Psoas muscle (tissue), 8 donors: ENCODE measurements at regions of chr12 and their contacts with region 1.

Region 1: GRCh38 chr12:90290980-90291975 is 582.6 kb upstream of the ATP2B1 start:
- DNase-seq: no peak
- ATAC-seq: no peak
- H3K4me3 ChIP-seq: no peak overlapping the region
- H3K27ac ChIP-seq: no peak overlapping the region
- H3K4me1 ChIP-seq: no peaks in the 10 kb centered on the region
- H3K27me3 ChIP-seq: no peaks in the 10 kb centered on the region
- CTCF ChIP-seq: no peak

Region 2: DNA sequence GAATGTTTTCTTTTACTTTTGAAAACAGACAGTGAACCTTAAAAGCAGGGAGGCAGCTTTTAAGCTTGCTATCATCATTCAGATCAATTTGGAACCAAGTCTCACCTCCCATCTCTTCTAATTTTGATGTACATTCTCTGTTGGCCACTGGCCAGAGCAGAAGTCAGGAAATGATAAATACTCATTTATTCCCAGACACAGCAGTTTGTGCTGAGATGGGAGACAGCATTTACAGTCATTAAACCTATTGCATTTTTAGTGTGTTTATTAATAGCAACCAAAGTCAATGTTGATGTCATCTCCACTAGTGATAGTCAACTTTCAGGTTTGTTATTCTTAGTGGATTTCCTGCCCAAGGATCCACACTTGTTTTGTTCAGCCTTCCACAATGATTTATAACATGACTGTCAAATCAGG is 262.6 kb before region 1 on chr12:
- intact Hi-C with region 1: no loop called
- DNase-seq: no peak
- ATAC-seq: peak in 3 of 4 donors; percentile 41 to 76 (median 68)
- H3K4me3 ChIP-seq: no peak overlapping the region
- H3K27ac ChIP-seq: peak overlapping the region; percentile 78
- H3K4me1 ChIP-seq: peaks cover 15% of the 10 kb centered on the region
- H3K27me3 ChIP-seq: no peaks in the 10 kb centered on the region
- CTCF ChIP-seq: no peak

Region 3: DNA sequence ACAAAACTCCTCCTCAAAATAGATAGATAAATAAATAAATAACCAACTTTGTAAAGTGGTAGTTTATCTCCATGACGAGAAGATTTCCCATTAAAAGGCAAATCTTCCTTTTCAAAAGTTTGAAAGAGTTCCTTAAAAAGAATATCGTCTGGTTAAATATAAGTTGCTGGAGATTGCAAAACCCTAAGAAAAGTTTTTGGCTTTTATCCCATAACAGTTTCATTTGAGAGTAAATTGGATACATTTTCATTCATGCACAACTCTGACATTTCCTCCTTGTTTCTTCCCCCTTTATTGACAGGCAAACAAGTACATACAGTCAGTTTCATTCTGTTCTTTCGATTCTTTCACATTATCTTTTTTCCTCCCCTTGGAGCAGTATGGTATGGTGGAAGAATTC is 1899.8 kb after region 1 on chr12:
- intact Hi-C with region 1: loop called in 1 of 2 experiments (anchors 5 kb)
- DNase-seq: no peak
- ATAC-seq: no peak
- H3K4me3 ChIP-seq: no peak overlapping the region
- H3K27ac ChIP-seq: no peak overlapping the region
- H3K4me1 ChIP-seq: no peaks in the 10 kb centered on the region
- H3K27me3 ChIP-seq: no peaks in the 10 kb centered on the region
- CTCF ChIP-seq: no peak